GM18951 (cell line): ENCODE measurements at regions of chr16 and their contacts with region 1.

Region 1: DNA sequence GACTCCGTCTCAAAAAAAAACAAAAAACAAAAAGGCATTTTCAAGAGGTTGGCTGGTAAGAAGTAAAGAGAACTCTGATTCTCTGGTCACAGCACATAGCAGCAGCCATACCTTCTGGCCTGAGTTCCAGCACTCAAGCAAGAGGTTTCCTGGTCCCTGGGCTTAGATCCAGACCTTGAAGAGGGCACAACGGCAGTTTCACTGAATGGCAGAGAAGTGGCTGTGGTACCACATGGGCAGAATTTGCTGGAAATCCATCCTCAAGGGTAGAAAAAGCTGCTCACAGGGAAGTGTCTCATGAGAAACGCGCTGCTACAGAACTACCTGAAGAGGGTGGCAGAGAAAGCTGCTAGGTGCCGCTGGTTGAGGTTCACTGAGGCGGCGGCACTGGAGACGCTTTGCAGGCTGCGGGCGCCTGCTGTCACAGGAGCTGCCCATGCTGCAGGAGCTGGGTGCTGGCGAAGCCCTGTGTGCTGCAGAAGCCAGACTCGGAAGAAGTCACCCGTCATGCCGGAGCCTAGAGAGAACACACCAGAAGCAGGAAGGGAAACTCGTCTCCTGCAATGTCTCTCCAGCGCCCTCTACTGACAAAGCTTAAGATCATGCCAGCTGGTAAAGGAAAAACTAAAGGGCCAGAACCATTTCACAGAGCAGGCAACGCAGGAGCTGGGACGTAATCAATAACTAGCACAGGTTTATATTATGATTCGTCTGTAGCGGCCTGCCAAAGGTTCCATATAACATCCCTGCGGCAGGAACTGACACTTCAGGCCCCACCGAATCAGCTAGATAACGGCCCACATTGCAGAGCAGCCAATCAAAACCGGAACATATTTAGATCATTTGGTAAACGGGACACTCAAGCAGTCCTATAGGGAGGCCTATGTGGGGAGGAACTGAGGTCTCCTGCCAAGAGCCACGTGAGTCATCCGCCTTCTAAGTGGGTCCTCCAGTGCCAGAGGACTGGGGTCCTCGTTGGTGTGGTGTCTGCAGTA is 5.4 kb upstream of the ZNF213 start:
- POLR2A ChIP-seq: peak; percentile 52

Region 2: GRCh38 chr16:3059723-3060242 is 69.7 kb before region 1 on chr16:
- in situ Hi-C with region 1: loop called (anchors 5 kb)
- POLR2A ChIP-seq: no peak